ENCODE measurements at regions of chr11 and their contacts with region 1.

Region 1: GRCh38 chr11:11463405-11463804 is 110.4 kb upstream of the CSNK2A3 start:
- DNase-seq: no peak
- ATAC-seq: no peak
- H3K4me3 ChIP-seq: no peak overlapping the region
- H3K27ac ChIP-seq: no peak overlapping the region
- H3K4me1 ChIP-seq: no peaks in the 10 kb centered on the region
- H3K27me3 ChIP-seq: no peaks in the 10 kb centered on the region
- CTCF ChIP-seq: no peak

Region 2: DNA sequence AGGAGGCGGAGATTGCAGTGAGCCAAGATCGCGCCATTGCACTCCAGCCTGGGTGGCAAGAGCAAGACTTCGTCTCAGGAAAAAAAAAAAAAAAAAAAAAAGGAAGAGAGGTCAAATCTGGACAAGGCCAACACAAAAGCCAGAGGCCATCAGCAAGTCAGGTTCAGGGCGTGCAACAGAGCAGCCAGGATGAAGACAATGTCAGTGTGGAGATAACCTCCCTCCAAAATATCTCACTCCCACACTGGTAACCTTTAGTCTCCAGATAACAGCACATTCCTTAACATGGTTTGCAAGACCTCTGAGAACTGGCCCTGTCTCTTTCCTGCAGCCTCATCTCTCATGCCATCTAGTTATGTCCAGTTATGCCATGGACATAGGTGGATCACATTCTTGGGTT is 115.1 kb before region 1 on chr11:
- CTCF ChIA-PET with region 1: no interaction called
- POLR2A ChIA-PET with region 1: interaction called, 12 read pairs
- in situ Hi-C with region 1: no loop called
- intact Hi-C with region 1: no loop called
- DNase-seq: no peak
- ATAC-seq: no peak
- H3K4me3 ChIP-seq: no peak overlapping the region
- H3K27ac ChIP-seq: no peak overlapping the region
- H3K4me1 ChIP-seq: no peaks in the 10 kb centered on the region
- H3K27me3 ChIP-seq: no peaks in the 10 kb centered on the region
- CTCF ChIP-seq: no peak